Activated CD4-positive, alpha-beta T cell treated with anti-CD3 and anti-CD28 coated beads for 36 hours (primary cell): ENCODE measurements at regions of chr1 and their contacts with region 1.

Region 1: GRCh38 chr1:27772933-27773825 is at the start of gene STX12:
- DNase-seq: peak; percentile 100
- ATAC-seq: peak; percentile 97
- H3K4me3 Mint-ChIP-seq: peak within 1 kb of the TSS; percentile 98
- H3K27ac Mint-ChIP-seq: peak within 1 kb of the TSS; percentile 99
- H3K4me1 Mint-ChIP-seq: peaks cover 31% of the 10 kb centered on the region
- H3K27me3 Mint-ChIP-seq: no peaks in the 10 kb centered on the region
- total RNA-seq, gene STX12: 26.8 to 37.4 TPM

Region 2: DNA sequence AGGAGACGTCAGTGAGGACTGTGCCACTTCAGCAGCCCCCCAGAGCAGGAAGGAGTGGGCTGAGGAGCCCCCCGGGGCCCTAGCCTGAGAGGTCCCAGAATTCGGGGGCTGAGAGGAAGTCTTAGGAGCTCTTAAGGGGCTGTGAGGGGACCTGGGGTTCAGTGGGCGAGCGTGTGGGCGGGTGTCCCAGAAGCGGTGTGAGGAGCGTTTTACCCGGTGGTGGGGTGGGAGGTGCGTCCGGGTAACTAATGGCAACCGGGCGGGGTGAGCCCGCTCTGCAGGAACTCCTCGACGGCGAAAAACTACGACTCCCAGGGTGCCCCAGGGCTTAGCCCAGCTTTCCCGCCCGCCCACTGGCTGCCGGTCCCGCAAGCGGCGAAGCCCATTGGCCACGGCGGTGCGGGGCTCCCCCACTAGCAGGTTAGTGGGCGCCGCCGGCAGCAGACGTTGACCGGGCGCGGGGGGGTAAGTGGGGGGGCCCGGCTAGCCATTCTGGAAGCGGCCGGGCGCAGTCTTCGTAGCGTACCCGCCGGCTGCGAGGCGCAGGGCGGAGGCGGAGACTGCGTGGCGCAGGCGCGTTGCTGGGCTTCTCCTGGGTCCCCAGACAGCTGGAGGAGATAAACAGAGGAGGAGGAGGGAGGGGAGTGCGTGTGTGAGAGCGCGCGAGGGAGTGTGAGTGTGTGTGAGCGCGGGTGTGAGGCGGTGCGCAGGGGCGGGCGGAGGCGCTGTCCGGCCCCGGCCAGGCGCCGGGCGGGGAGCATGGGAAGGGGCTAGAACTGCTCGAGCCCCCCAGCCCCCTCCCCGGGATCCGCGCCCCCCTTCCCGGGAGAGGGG is 538.9 kb before region 1 on chr1 and contains the start of gene WDTC1:
- CTCF ChIA-PET with region 1: no interaction called
- POLR2A ChIA-PET with region 1: no interaction called
- intact Hi-C with region 1: loop called in 1 of 2 experiments (anchors 1 kb)
- DNase-seq: peak; percentile 99
- ATAC-seq: peak; percentile 95
- H3K4me3 Mint-ChIP-seq: peak within 1 kb of the TSS; percentile 95
- H3K27ac Mint-ChIP-seq: peak within 1 kb of the TSS; percentile 93
- H3K4me1 Mint-ChIP-seq: peaks cover 27% of the 10 kb centered on the region
- H3K27me3 Mint-ChIP-seq: no peaks in the 10 kb centered on the region
- total RNA-seq, gene WDTC1: 19.3 to 21.9 TPM

Region 3: DNA sequence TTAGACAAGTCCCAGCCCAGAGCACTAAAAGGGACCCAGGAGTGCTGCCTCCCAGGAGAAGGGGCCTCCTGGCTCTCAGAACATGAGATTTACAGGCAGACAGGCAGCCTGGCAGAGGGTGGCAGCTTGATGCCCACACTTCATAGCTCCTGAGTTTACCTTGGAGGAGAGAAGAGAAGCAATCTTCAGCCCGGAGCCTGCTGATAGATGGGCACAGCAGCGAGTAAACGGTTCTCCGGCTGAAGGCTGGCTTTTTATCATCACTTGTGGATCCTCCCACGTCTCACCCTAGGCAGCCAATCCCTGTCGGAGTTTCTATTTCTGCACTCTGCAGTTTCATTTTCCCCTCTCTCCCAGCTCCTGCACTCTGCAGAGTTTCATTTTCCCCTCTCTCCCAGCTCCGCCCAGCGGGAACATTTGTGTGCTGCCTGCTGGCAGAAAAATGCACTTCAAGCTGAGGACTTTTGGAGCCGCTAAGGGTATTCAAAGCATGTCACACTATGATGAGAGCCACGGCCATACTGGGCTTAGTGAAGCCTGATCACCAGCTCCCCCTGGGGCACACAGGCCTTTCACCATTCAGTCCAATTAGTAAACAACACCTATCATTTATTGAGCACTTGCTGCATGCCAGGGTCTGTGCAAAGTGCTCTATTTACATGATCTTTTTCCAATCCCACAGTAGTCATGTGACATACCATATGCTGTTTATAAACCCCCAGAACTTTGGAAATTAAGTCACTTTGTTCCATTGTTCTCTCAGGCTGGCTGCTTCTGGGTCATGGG is 101.0 kb before region 1 on chr1 and contains the start of gene IFI6:
- CTCF ChIA-PET with region 1: interaction called, 12 read pairs
- POLR2A ChIA-PET with region 1: interaction called, 4 read pairs
- intact Hi-C with region 1: loop called (anchors 1 kb)
- DNase-seq: peak; percentile 88
- ATAC-seq: peak; percentile 91
- H3K4me3 Mint-ChIP-seq: peak within 1 kb of the TSS; percentile 83
- H3K27ac Mint-ChIP-seq: peak within 1 kb of the TSS; percentile 89
- H3K4me1 Mint-ChIP-seq: peaks cover 31% of the 10 kb centered on the region
- H3K27me3 Mint-ChIP-seq: no peaks in the 10 kb centered on the region
- total RNA-seq, gene IFI6: 41.8 to 62.5 TPM

Region 4: DNA sequence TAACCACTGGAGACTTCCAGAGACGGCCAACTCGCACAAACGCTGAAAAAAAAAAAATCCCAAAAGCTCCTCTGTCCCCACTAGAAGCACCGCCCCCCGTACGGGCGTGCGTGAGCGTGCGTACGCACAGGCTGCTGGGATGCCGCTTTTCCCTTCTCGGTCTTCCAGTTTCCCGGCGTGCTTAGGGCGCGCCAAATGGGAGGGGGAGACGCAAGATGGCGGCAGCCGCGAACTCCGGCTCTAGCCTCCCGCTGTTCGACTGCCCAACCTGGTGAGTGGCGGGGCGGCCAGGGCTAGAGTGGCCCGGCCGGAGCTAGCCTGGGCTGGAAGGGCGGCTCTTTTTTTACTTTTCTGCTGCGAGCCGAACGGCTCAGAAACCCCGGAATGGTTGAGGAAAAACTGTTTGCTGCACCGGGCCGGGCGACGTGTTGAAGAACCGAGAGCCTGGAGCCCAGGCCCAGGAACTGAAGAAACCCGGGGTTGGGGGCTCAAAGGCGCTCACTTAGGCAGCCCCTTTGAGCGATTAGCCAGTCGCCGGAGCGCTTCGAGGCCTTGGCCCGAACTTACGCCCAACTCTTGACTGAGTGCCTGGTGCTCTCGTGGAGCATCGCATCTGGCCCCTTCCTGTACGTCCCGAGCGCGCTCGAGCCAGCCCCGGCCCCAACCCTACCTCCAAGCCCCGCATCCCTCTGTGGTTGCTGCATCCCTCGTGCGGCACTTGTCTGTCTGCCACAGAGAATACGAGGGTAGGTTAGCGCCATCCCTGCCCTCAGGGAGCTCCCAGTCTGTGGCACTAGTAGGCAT is 57.6 kb after region 1 on chr1 and contains the start of gene PPP1R8:
- CTCF ChIA-PET with region 1: interaction called, 7 read pairs
- POLR2A ChIA-PET with region 1: interaction called, 16 read pairs
- intact Hi-C with region 1: loop called (anchors 1 to 2 kb)
- DNase-seq: peak; percentile 94
- ATAC-seq: peak; percentile 99
- H3K4me3 Mint-ChIP-seq: peak within 1 kb of the TSS; percentile 94
- H3K27ac Mint-ChIP-seq: peak within 1 kb of the TSS; percentile 94
- H3K4me1 Mint-ChIP-seq: peaks cover 40% of the 10 kb centered on the region
- H3K27me3 Mint-ChIP-seq: no peaks in the 10 kb centered on the region
- total RNA-seq, gene PPP1R8: 49.6 to 65.9 TPM

Region 5: DNA sequence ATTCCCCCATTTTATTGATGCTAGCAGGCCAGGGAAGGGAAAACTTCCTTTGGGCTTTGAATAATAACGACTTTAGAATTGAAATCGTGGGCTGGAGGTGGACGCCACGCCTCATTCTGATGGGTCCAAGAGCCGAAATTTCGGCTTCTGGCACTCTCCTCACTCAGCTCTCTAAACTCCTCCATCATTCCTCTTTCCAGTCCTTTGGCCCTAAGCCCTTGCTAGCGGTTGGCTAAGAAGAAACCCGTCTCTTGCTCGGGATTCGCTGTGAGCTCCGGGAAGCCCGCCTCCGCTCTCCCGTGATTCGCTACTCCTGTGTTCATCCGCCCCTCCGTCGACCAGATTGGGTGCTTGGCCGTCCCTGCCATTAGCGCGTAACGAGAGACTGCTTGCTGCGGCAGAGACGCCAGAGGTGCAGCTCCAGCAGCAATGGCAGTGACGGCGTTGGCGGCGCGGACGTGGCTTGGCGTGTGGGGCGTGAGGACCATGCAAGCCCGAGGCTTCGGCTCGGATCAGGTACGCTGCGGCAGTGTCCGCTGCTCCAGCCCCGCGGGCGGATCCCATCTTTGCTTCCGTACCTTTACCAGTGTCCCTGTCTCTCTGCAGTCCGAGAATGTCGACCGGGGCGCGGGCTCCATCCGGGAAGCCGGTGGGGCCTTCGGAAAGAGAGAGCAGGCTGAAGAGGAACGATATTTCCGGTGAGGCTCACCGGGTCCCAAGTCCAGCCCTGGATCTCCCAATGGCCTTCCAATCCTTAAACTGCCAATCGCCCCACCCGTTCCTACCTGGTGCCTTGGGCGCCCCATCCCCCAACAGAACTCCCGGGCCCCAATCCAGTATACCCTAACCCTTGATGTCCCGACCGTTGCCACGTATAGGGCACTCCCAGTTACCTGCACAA is 462.8 kb after region 1 on chr1 and contains the start of gene ATP5IF1:
- CTCF ChIA-PET with region 1: no interaction called
- POLR2A ChIA-PET with region 1: no interaction called
- intact Hi-C with region 1: loop called in 1 of 2 experiments (anchors 5 kb)
- DNase-seq: peak; percentile 97
- ATAC-seq: peak; percentile 97
- H3K4me3 Mint-ChIP-seq: no peak within 1 kb of the TSS
- H3K27ac Mint-ChIP-seq: no peak within 1 kb of the TSS
- H3K4me1 Mint-ChIP-seq: peaks cover 15% of the 10 kb centered on the region
- H3K27me3 Mint-ChIP-seq: no peaks in the 10 kb centered on the region
- total RNA-seq, gene ATP5IF1: 192 to 195 TPM

Region 6: DNA sequence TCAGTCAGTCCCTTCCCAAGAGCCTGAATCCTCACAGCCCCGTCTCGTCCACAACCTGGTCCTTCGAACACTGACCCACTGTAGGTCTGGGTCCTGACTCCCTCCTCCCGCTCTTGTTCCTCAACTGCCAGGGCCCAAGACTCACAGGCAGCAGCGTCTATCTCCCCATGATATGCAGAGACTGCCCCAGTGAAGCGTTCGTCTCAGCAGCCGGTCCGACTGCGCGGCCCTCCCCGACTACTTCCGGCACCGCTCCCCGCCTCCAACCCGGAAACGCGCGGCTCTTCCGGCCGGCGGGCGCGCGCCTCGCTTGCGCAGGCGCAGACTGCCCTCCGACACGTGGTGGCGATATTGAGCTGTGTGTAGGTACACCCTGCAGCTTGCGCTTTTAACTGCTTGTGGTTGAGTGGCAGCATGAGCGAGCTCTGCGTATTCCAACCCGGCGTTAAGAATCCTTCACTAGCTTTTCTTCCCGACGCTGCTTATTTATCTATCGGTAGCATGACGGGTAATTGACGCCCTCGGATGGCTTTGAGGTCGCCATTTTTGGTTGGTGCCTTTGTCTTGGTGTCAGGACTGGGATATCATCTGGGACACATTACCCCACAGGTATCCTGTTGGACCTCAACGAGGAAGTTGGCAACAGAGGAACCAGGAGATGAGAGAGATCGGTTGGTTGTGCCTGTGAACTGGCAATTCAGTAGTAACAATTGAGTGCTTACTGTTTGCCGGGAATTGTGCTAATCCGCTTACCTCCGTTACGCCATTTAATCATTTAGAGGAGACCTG is 869.9 kb after region 1 on chr1 and contains the start of gene TAF12:
- CTCF ChIA-PET with region 1: no interaction called
- POLR2A ChIA-PET with region 1: no interaction called
- intact Hi-C with region 1: loop called in 1 of 2 experiments (anchors 2 kb)
- DNase-seq: peak; percentile 95
- ATAC-seq: peak; percentile 81
- H3K4me3 Mint-ChIP-seq: peak within 1 kb of the TSS; percentile 98
- H3K27ac Mint-ChIP-seq: peak within 1 kb of the TSS; percentile 97
- H3K4me1 Mint-ChIP-seq: peaks cover 50% of the 10 kb centered on the region
- H3K27me3 Mint-ChIP-seq: no peaks in the 10 kb centered on the region
- total RNA-seq, gene TAF12: 23.8 to 32.5 TPM